Natural killer cell (primary cell): ENCODE measurements at regions of chr11 and their contacts with region 1.

Region 1: DNA sequence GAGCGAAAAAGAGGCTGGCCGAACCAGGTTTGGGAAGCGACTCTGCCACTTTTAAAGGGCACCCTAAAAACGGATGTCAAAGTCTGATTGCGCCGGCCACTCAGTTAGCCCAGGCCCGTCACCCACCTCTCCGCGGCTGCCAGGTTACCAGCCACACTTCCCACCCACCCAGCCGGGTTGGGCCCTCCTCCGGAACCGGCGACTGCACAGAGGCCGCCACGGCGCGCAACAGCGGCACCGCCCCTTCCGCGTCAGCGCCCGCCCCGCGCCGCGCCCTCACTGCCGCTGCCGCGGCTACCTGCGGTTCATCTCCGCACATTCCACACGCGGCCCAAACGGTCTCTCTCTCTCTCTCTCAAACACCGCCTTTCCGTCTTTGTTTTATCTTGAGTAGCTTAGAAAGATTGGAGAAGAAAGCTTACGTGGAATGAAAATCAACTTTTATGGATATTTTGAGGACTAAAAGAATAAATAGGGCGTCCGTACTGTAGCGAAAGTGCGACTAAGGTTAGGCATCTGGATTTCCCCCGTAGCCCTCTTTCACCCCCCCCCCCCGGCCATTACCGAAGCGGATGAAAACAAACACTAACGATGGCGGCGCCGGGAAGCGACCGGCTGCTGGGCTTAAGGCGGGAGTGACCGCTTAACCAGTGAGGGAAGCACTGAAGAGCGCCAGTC is at the starts of genes ATG13 and HARBI1:
- DNase-seq: peak; percentile 91 to 96
- ATAC-seq: peak; percentile 90 to 98 (median 94)
- H3K4me3 ChIP-seq: peak within 1 kb of the TSS; percentile 95
- H3K4me3 Mint-ChIP-seq: peak within 1 kb of the TSS; percentile 99
- H3K27ac ChIP-seq: peak within 1 kb of the TSS; percentile 99
- H3K27ac Mint-ChIP-seq: peak within 1 kb of the TSS; percentile 99 to 100
- H3K4me1 ChIP-seq: peaks cover 20% of the 10 kb centered on the region
- H3K4me1 Mint-ChIP-seq: peaks cover 33 to 42% of the 10 kb centered on the region in 2 donors
- H3K27me3 ChIP-seq: no peaks in the 10 kb centered on the region
- H3K27me3 Mint-ChIP-seq: no peaks in the 10 kb centered on the region
- CTCF ChIP-seq: no peak
- total RNA-seq, gene ATG13: 125 to 137 (median 132) TPM
- total RNA-seq, gene HARBI1: 9.9 to 16.8 (median 12.7) TPM

Region 2: DNA sequence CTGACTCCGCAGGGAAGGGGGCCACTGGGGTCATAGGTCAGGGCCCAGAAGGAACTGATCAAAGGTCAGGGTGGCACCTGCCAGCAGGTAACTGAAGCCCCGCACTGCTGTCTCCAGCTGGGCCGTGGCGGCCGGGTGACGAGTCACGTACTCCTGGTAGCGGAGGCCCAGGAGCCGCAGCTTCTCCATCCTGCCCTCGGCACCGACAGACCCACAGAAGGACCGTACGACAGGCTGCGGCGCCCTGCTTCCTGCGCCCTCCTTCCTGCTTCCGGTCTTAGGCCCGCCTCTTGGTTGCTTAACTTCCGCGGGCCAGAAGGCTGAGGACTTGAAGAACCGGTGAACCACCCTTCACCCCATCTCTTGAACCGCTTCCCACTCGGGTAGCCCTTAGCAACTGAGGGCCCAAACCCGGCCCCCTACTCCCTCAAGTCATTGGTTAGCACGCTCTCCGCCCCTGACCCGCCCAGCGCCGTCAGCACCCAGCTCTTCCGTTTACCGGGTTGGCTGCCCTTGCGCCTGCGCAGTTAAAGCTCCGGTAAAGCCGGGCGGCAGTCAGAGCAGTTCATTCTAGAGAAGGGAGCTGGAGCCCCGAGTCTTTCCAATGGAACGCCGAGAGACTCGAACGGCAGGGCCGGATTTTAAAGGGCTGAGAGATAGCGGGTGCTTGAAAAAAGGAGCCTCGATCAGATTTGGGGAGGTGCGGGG is 699.4 kb before region 1 on chr11 and contains the start of gene PEX16:
- intact Hi-C with region 1: loop called (anchors 1 kb)
- DNase-seq: peak; percentile 92 to 99
- ATAC-seq: peak; percentile 88 to 97 (median 92)
- H3K4me3 ChIP-seq: peak within 1 kb of the TSS; percentile 85
- H3K4me3 Mint-ChIP-seq: peak within 1 kb of the TSS; percentile 97
- H3K27ac ChIP-seq: peak within 1 kb of the TSS; percentile 91
- H3K27ac Mint-ChIP-seq: peak within 1 kb of the TSS; percentile 96
- H3K4me1 ChIP-seq: peaks cover 52% of the 10 kb centered on the region
- H3K4me1 Mint-ChIP-seq: peaks cover 30 to 43% of the 10 kb centered on the region in 2 donors
- H3K27me3 ChIP-seq: peaks cover 3% of the 10 kb centered on the region
- H3K27me3 Mint-ChIP-seq: peaks cover 0 to 4% of the 10 kb centered on the region in 2 donors
- CTCF ChIP-seq: no peak
- total RNA-seq, gene PEX16: 61.3 to 75.8 (median 67.6) TPM

Region 3: GRCh38 chr11:46560300-46560991 is 56.7 kb before region 1 on chr11:
- intact Hi-C with region 1: loop called (anchors 1 kb)
- DNase-seq: peak in 1 of 2 donors; percentile 68
- ATAC-seq: peak; percentile 70 to 77 (median 72)
- H3K4me3 ChIP-seq: peak overlapping the region; percentile 40
- H3K4me3 Mint-ChIP-seq: peak overlapping the region; percentile 95
- H3K27ac ChIP-seq: peak overlapping the region; percentile 81
- H3K27ac Mint-ChIP-seq: peak overlapping the region; percentile 91
- H3K4me1 ChIP-seq: peaks cover 5% of the 10 kb centered on the region
- H3K4me1 Mint-ChIP-seq: peaks cover 45 to 49% of the 10 kb centered on the region in 2 donors
- H3K27me3 ChIP-seq: no peaks in the 10 kb centered on the region
- H3K27me3 Mint-ChIP-seq: no peaks in the 10 kb centered on the region
- CTCF ChIP-seq: no peak

Region 4: GRCh38 chr11:46593550-46594373 is 23.4 kb before region 1 on chr11 and contains the start of gene AMBRA1:
- intact Hi-C with region 1: loop called (anchors 1 kb)
- DNase-seq: peak; percentile 75 to 90
- ATAC-seq: peak; percentile 95 to 97 (median 95)
- H3K4me3 ChIP-seq: peak within 1 kb of the TSS; percentile 65
- H3K4me3 Mint-ChIP-seq: peak within 1 kb of the TSS; percentile 97
- H3K27ac ChIP-seq: peak within 1 kb of the TSS; percentile 67
- H3K27ac Mint-ChIP-seq: peak within 1 kb of the TSS; percentile 87 to 89
- H3K4me1 ChIP-seq: peaks cover 10% of the 10 kb centered on the region
- H3K4me1 Mint-ChIP-seq: peaks cover 39 to 40% of the 10 kb centered on the region in 2 donors
- H3K27me3 ChIP-seq: no peaks in the 10 kb centered on the region
- H3K27me3 Mint-ChIP-seq: no peaks in the 10 kb centered on the region
- CTCF ChIP-seq: no peak
- total RNA-seq, gene AMBRA1: 41.3 to 52.7 (median 46.2) TPM

Region 5: DNA sequence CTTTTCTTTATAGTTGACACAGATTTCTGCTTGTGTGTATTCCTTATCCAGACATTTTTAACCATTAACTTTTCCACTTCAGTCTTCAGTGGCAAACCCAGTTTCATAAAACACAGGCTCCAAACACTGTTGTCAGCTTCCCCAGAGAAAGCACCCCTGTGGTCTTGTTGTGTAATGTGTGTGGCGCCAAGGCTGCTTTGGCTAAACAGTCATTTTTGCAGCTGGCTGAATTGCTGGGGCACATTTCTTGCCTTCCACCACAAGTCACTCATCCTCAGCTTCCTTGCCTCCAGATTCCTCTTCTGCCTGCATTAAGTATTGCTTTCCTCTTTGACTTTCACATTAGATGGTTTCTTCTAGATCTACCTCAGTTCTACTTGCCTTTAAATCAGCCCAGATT is 42.8 kb after region 1 on chr11:
- intact Hi-C with region 1: no loop called
- DNase-seq: no peak
- ATAC-seq: no peak
- H3K4me3 ChIP-seq: no peak overlapping the region
- H3K4me3 Mint-ChIP-seq: no peak overlapping the region
- H3K27ac ChIP-seq: no peak overlapping the region
- H3K27ac Mint-ChIP-seq: no peak overlapping the region
- H3K4me1 ChIP-seq: no peaks in the 10 kb centered on the region
- H3K4me1 Mint-ChIP-seq: no peaks in the 10 kb centered on the region
- H3K27me3 ChIP-seq: no peaks in the 10 kb centered on the region
- H3K27me3 Mint-ChIP-seq: no peaks in the 10 kb centered on the region
- CTCF ChIP-seq: no peak

Region 6: GRCh38 chr11:46675288-46675851 is 58.2 kb after region 1 on chr11:
- intact Hi-C with region 1: loop called (anchors 10 kb)
- DNase-seq: no peak
- ATAC-seq: no peak
- H3K4me3 ChIP-seq: no peak overlapping the region
- H3K4me3 Mint-ChIP-seq: peak overlapping the region; percentile 4
- H3K27ac ChIP-seq: peak overlapping the region; percentile 71
- H3K27ac Mint-ChIP-seq: peak overlapping the region; percentile 90 to 94
- H3K4me1 ChIP-seq: peaks cover 70% of the 10 kb centered on the region
- H3K4me1 Mint-ChIP-seq: peaks cover 44 to 52% of the 10 kb centered on the region in 2 donors
- H3K27me3 ChIP-seq: no peaks in the 10 kb centered on the region
- H3K27me3 Mint-ChIP-seq: no peaks in the 10 kb centered on the region
- CTCF ChIP-seq: no peak

Region 7: DNA sequence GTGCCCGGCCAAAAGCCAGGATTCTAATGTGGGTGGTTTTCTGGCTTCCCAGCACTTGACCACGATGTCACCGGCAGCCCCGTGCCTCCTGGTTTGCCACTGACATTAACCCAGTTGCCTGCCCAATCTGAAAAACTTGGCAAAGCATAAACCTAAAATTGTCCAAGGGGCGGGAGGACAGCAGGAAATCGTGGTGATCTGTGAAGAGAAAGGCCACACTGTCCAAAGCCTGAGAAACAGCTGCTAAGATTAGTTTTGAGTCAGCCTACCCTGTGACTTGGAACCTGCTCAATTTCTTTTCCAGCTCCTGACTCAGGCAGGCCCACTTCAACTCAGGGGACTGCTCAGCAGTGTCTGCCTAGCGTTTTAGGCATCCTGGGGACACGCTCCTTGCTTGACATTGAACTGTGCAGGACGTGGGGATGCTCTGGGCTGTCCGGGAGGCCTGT is 93.7 kb after region 1 on chr11:
- intact Hi-C with region 1: no loop called
- DNase-seq: no peak
- ATAC-seq: no peak
- H3K4me3 ChIP-seq: no peak overlapping the region
- H3K4me3 Mint-ChIP-seq: no peak overlapping the region
- H3K27ac ChIP-seq: no peak overlapping the region
- H3K27ac Mint-ChIP-seq: no peak overlapping the region
- H3K4me1 ChIP-seq: no peaks in the 10 kb centered on the region
- H3K4me1 Mint-ChIP-seq: no peaks in the 10 kb centered on the region
- H3K27me3 ChIP-seq: no peaks in the 10 kb centered on the region
- H3K27me3 Mint-ChIP-seq: no peaks in the 10 kb centered on the region
- CTCF ChIP-seq: no peak